AG04449 (cell line): ENCODE measurements at regions of chr6 and their contacts with region 1.

Region 1: GRCh38 chr6:33585403-33586107 is 5.5 kb upstream of the BAK1 start:
- DNase-seq: no peak
- H3K4me3 ChIP-seq: peak overlapping the region; percentile 8; the same call in 1 of the 2 replicates
- CTCF ChIP-seq: peak; percentile 95

Region 2: GRCh38 chr6:32763427-32763826 is 822.1 kb before region 1 on chr6 and contains the start of gene HLA-DQB2:
- CTCF ChIA-PET with region 1: no interaction called
- POLR2A ChIA-PET with region 1: no interaction called
- DNase-seq: no peak
- H3K4me3 ChIP-seq: no peak within 1 kb of the TSS
- CTCF ChIP-seq: no peak

Region 3: GRCh38 chr6:33105916-33106871 is 479.4 kb before region 1 on chr6:
- CTCF ChIA-PET with region 1: no interaction called
- POLR2A ChIA-PET with region 1: no interaction called
- DNase-seq: no peak
- H3K4me3 ChIP-seq: no peak overlapping the region
- CTCF ChIP-seq: no peak

Region 4: GRCh38 chr6:33271458-33272274 is 313.9 kb before region 1 on chr6 and contains the starts of genes RPS18 and VPS52:
- CTCF ChIA-PET with region 1: no interaction called
- POLR2A ChIA-PET with region 1: no interaction called
- DNase-seq: peak; percentile 96
- H3K4me3 ChIP-seq: peak within 1 kb of the TSS; percentile 93
- CTCF ChIP-seq: no peak

Region 5: GRCh38 chr6:33607784-33608161 is 22.2 kb after region 1 on chr6:
- CTCF ChIA-PET with region 1: interaction called, 25 read pairs
- POLR2A ChIA-PET with region 1: no interaction called
- DNase-seq: no peak
- H3K4me3 ChIP-seq: no peak overlapping the region
- CTCF ChIP-seq: peak; percentile 1

Region 6: DNA sequence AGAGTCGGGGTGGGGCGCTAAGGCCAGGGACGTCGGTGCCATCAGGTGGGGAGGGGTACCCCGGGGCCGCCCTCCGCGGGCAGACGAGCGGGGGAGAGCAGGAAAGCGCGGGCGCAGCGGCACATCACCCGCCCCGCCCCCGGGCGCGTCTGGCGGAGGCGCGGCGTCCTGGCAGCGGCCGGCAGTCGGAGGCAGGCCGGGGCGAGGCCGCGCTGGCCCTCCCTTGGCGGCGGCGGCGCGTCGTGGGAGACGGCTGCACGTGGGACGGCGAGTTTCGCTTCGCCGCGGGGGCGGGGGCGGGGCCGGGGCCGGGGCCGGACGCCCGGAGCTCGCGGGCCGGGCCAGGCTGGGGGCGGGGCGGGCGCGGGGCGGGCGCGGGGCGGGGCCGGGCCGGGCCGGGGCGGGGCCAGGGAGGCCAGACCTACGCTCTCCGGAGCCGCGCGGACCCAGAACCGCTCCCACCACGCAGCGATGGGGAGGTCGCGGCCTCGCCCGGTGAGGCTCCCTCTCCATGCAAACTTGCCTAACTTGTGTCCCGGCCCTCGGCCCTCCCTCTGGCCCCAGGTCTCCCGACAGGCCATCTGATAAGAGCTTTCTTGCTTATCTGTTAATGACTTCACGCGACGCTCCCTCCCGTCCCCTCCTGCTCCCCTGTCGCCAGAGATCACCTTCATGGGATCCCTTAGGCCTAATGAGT is 48.1 kb after region 1 on chr6:
- CTCF ChIA-PET with region 1: interaction called, 25 read pairs
- POLR2A ChIA-PET with region 1: no interaction called
- DNase-seq: no peak
- H3K4me3 ChIP-seq: peak overlapping the region; percentile 61
- CTCF ChIP-seq: no peak

Region 7: GRCh38 chr6:33700391-33701050 is 115.0 kb after region 1 on chr6:
- CTCF ChIA-PET with region 1: interaction called, 539 read pairs
- POLR2A ChIA-PET with region 1: interaction called, 8 read pairs
- DNase-seq: peak; percentile 14
- H3K4me3 ChIP-seq: no peak overlapping the region
- CTCF ChIP-seq: peak; percentile 85

Region 8: DNA sequence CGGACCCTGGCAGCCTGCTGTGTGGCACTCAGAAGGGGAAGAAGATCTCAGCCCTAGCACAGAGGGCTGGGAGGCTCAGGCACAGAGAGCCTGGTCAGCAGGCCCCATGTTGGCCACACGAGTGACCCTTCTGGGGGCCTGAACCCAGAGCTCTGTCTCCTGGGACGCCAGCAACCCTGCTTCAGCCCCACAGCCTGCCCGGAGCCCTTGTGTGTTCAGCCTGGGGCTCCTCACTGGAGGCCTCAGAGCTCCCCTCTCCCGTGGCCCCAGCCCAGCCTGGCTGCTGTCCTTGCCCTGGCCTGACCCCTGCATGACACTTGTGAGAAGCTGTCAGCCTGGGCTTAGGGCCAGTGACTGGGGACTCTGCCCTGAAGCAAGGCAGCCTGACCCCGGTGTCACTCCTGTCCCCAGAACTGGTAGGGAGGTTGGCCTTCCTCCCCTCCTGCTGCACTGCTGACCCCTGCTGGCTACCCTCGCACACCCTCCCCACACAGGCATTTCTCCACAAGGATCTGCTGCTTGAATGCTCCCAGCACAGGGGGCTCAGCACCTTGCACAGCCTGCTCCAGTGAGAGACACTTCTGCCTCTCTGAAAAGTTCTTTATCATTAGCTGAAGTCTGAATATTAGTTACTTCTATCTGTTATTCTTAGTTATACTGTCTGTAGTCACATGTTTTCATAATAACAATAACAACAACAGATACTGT is 176.5 kb after region 1 on chr6:
- CTCF ChIA-PET with region 1: interaction called, 41 read pairs
- POLR2A ChIA-PET with region 1: no interaction called
- DNase-seq: no peak
- H3K4me3 ChIP-seq: no peak overlapping the region
- CTCF ChIP-seq: peak; percentile 70

Region 9: GRCh38 chr6:33967966-33968724 is 382.6 kb after region 1 on chr6:
- CTCF ChIA-PET with region 1: no interaction called
- POLR2A ChIA-PET with region 1: no interaction called
- DNase-seq: no peak
- H3K4me3 ChIP-seq: no peak overlapping the region
- CTCF ChIP-seq: peak; percentile 25

Region 10: GRCh38 chr6:34154668-34155447 is 569.3 kb after region 1 on chr6:
- CTCF ChIA-PET with region 1: interaction called, 44 read pairs
- POLR2A ChIA-PET with region 1: no interaction called
- DNase-seq: no peak
- H3K4me3 ChIP-seq: peak overlapping the region; percentile 42
- CTCF ChIP-seq: peak; percentile 94